GM12878 (cell line): ENCODE measurements at regions of chr6 and their contacts with region 1.

Region 1: DNA sequence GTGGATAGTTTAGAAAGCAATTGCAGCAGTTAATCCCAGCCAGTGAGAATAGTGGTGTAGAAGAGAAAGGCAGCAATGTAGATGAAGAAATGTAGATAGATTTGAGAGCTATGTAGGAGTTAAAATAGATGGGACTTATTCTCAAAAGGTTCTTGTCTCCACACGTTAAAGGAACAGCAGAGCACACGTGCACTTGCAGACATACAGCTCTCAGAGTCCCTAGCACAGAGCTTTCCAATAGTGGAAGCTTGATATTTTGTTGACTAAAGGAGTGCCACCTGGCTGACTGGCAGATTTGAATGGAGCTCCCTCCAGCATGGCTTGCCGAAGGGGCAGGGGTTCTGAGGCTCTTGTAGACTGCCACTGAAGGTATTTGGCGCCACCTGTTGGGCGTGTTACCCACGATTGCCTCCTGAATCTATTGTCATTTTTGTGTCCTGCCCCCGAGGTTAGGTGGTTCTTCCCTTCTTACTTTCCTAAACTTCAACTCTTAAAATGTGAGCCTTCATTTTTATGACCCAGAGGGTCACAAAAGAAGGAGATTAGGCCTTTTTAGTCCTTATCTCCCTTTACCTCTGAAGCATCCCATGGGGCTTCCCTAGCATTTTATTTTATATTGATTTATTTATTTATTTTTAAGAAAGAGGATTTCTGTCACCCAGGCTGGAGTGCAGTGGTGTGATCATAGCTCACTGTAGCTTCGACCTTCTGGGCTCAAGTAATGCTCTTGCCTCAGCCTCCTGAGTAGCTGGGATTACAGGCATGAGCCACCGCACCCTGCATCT is 16.4 kb downstream of the BRD2 start:
- DNase-seq: no peak
- ATAC-seq: peak; percentile 83
- H3K4me3 ChIP-seq: no peak overlapping the region
- H3K27ac ChIP-seq: no peak overlapping the region
- H3K4me1 ChIP-seq: peaks cover 7% of the 10 kb centered on the region; the same call in 1 of the 2 replicates
- H3K27me3 ChIP-seq: no peaks in the 10 kb centered on the region
- CTCF ChIP-seq: peak; percentile 79 to 97 (median 89); a peak in 5 of 6 replicates
- EP300 ChIP-seq: no peak
- POLR2A ChIP-seq: no peak
- RAD21 ChIP-seq: peak; percentile 93

Region 2: DNA sequence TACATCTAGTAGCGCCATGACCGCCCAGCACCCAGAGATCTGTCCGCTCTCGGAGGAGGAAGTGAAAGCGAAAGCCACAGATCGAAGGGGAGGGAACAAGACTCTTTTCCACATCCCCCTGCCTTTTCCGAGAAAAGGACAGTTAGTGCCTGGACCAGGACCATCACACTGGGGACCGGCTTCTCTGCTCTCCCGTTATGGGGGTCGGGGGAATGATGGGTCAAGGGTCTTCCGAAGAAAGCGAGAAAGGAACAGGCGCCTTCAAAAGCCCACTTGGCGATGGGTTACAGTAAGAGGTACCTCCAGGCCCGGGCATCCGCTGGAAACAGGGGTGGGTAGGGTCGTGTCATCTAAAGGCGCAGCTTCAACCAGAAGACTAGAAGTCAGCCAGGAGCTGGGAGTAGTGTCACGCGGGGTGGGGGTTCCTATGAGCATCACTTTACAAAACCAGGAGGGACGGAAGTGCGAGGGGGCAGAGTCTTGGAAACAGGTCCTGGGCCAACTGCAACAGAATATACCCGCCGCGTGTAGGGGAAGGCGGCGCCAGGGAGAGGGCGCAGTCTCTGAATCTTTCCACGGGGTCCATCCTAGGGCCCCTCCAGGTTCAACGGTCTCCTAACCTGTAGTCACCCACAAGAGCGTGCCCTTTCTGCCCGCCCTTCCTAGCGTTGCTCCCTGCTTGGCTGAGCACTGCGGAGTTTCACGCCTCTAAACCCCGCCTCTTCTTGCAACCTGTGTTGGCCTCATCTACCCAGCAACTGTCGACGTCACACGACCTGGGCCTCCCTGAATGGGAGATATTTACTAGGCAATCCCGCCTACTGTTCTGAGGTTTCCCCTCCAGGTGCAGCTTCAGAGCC is 140.6 kb before region 1 on chr6 and contains the start of gene PSMB8:
- CTCF ChIA-PET with region 1: interaction called, 36 read pairs
- POLR2A ChIA-PET with region 1: no interaction called
- RAD21 ChIA-PET with region 1: interaction called, 25 read pairs
- SMC1A ChIA-PET with region 1: interaction called, 50 read pairs
- in situ Hi-C with region 1: no loop called
- intact Hi-C with region 1: no loop called
- DNase-seq: peak; percentile 98
- ATAC-seq: peak; percentile 75
- H3K4me3 ChIP-seq: peak within 1 kb of the TSS; percentile 96
- H3K27ac ChIP-seq: peak within 1 kb of the TSS; percentile 96
- H3K4me1 ChIP-seq: peaks cover 67% of the 10 kb centered on the region
- H3K27me3 ChIP-seq: no peaks in the 10 kb centered on the region
- CTCF ChIP-seq: no peak
- EP300 ChIP-seq: peak in 1 of 2 experiments; percentile 57; a peak in 1 of 4 replicates
- POLR2A ChIP-seq: peak; percentile 81
- RAD21 ChIP-seq: no peak
- polyA plus RNA-seq, gene PSMB8: 353 to 557 TPM

Region 3: GRCh38 chr6:32885698-32886286 is 99.0 kb before region 1 on chr6:
- CTCF ChIA-PET with region 1: interaction called, 260 read pairs
- POLR2A ChIA-PET with region 1: interaction called, 8 read pairs
- RAD21 ChIA-PET with region 1: interaction called, 104 read pairs
- SMC1A ChIA-PET with region 1: interaction called, 184 read pairs
- in situ Hi-C with region 1: loop called (anchors 5 kb)
- intact Hi-C with region 1: loop called (anchors 1 kb)
- DNase-seq: peak; percentile 23
- ATAC-seq: peak; percentile 83
- H3K4me3 ChIP-seq: no peak overlapping the region
- H3K27ac ChIP-seq: no peak overlapping the region
- H3K4me1 ChIP-seq: 0 out of 2 replicates have a peak, but pooled peaks cover 3% of the 10 kb centered on the region
- H3K27me3 ChIP-seq: no peaks in the 10 kb centered on the region; a peak in 1 of 4 replicates
- CTCF ChIP-seq: peak; percentile 38 to 61 (median 43); a peak in 5 of 6 replicates
- EP300 ChIP-seq: no peak
- POLR2A ChIP-seq: no peak
- RAD21 ChIP-seq: peak; percentile 83

Region 4: GRCh38 chr6:32920715-32921114 is 64.1 kb before region 1 on chr6:
- CTCF ChIA-PET with region 1: interaction called, 36 read pairs
- POLR2A ChIA-PET with region 1: interaction called, 5 read pairs
- RAD21 ChIA-PET with region 1: interaction called, 8 read pairs
- SMC1A ChIA-PET with region 1: interaction called, 10 read pairs
- in situ Hi-C with region 1: no loop called
- intact Hi-C with region 1: no loop called
- DNase-seq: no peak
- ATAC-seq: peak; percentile 50
- H3K4me3 ChIP-seq: no peak overlapping the region
- H3K27ac ChIP-seq: no peak overlapping the region; the same call in 1 of the 2 replicates
- H3K4me1 ChIP-seq: peaks cover 14% of the 10 kb centered on the region
- H3K27me3 ChIP-seq: no peaks in the 10 kb centered on the region
- CTCF ChIP-seq: no peak
- EP300 ChIP-seq: no peak
- POLR2A ChIP-seq: no peak
- RAD21 ChIP-seq: no peak

Region 5: DNA sequence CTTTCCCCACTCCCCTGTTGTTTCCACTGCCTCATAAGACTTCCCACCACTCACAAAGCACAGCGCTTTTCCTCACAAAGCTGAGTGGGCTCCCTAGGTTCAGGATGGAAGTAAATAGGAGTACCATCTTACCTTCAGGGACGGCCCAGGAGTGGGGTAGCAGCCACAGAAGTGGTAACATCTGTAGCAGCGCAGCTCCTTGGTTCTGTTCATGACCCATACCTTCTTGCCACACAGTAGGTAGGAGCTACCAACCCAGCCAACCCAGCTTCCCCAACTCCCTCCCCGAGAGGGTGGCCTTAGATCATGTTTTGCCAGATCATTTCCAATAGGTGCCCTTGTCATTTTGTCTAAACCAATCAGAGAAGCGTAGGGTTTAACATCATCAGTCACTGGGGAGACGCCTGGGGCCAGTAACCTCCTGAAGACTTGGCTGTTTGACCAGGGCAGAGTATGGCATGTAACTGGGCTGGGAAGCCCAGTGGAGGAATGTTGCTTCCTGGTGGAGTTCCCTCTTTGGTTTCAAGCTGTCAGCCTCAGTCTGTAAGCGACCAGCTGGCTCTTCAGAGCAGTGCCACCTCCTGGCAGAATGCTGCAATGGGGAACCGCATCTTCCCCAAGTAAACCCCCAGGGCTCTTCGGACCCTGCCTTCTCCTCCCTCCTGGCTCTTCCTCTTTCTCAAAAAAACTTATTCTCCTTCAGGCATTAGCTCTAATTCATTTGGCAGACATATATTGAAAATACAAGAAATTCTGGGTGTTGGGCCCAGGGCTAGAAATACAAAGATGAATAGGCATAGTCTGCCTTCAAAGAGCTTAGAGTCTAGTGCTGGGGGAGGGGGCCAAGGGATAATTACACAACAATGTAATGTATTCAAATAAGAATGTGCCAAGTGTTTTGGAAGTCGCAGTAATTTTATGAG is 31.7 kb before region 1 on chr6 and contains the start of gene HLA-DMA:
- CTCF ChIA-PET with region 1: interaction called, 239 read pairs
- POLR2A ChIA-PET with region 1: interaction called, 486 read pairs
- RAD21 ChIA-PET with region 1: interaction called, 114 read pairs
- SMC1A ChIA-PET with region 1: interaction called, 195 read pairs
- in situ Hi-C with region 1: no loop called
- intact Hi-C with region 1: loop called (anchors 2 kb)
- DNase-seq: peak; percentile 99
- ATAC-seq: peak; percentile 94
- H3K4me3 ChIP-seq: peak within 1 kb of the TSS; percentile 98
- H3K27ac ChIP-seq: peak within 1 kb of the TSS; percentile 90
- H3K4me1 ChIP-seq: peaks cover 44% of the 10 kb centered on the region
- H3K27me3 ChIP-seq: no peaks in the 10 kb centered on the region
- CTCF ChIP-seq: peak; percentile 71 to 77 (median 74)
- EP300 ChIP-seq: peak; percentile 32 to 67; a peak in 3 of 4 replicates
- POLR2A ChIP-seq: peak; percentile 98
- RAD21 ChIP-seq: peak; percentile 46
- polyA plus RNA-seq, gene HLA-DMA: 389 to 552 TPM

Region 6: GRCh38 chr6:33126101-33126714 is 141.4 kb after region 1 on chr6:
- CTCF ChIA-PET with region 1: interaction called, 10 read pairs
- POLR2A ChIA-PET with region 1: no interaction called
- RAD21 ChIA-PET with region 1: interaction called, 4 read pairs
- SMC1A ChIA-PET with region 1: interaction called, 4 read pairs
- in situ Hi-C with region 1: no loop called
- intact Hi-C with region 1: no loop called
- DNase-seq: no peak
- ATAC-seq: peak; percentile 76
- H3K4me3 ChIP-seq: no peak overlapping the region
- H3K27ac ChIP-seq: no peak overlapping the region
- H3K4me1 ChIP-seq: peaks cover 14% of the 10 kb centered on the region
- H3K27me3 ChIP-seq: no peaks in the 10 kb centered on the region
- CTCF ChIP-seq: peak; percentile 48 to 77 (median 71)
- EP300 ChIP-seq: no peak
- POLR2A ChIP-seq: no peak
- RAD21 ChIP-seq: peak; percentile 30

Region 7: DNA sequence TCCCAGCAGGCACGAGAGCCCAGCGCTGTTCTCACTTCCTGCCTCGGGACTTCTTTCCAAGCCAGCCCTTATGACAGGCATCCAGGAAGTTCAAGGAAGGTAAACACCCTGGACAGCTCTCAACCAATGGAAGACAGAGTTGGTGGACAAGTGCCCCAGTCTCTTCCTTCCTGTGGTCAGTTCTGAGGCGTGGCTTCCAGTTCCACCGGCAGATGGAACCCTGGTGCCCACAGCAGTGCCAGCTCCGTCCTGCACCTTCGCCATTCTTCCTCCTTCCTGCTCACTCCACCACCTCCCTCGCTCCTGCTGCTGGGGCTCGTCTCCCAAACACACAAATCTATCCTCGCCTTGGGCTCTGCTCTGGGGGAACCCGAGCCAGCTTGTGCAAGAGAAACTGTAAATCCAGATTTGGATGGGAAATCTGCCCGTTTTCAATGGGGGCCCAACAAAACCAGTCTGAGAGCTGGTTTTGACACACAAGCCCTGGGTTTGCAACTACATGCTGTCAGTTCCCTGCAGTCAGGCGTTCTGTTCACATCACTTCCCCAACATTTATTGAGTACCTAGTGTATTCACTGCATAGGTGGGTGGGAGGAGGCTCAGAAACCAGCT is 998.4 kb after region 1 on chr6:
- CTCF ChIA-PET with region 1: no interaction called
- POLR2A ChIA-PET with region 1: no interaction called
- RAD21 ChIA-PET with region 1: no interaction called
- SMC1A ChIA-PET with region 1: no interaction called
- in situ Hi-C with region 1: no loop called
- intact Hi-C with region 1: no loop called
- DNase-seq: no peak
- ATAC-seq: no peak
- H3K4me3 ChIP-seq: no peak overlapping the region
- H3K27ac ChIP-seq: no peak overlapping the region
- H3K4me1 ChIP-seq: no peaks in the 10 kb centered on the region
- H3K27me3 ChIP-seq: peaks cover 0 to 1% of the 10 kb centered on the region in 2 experiments; a peak in 2 of 4 replicates
- CTCF ChIP-seq: no peak
- EP300 ChIP-seq: no peak
- POLR2A ChIP-seq: no peak
- RAD21 ChIP-seq: no peak